Activated naive CD4-positive, alpha-beta T cell treated with anti-CD3 and anti-CD28 coated beads for 36 hours (primary cell): ENCODE measurements at regions of chr19 and their contacts with region 1.

Region 1: GRCh38 chr19:55476100-55476775 is at the start of gene ZNF628:
- DNase-seq: peak; percentile 99
- H3K4me3 Mint-ChIP-seq: peak within 1 kb of the TSS; percentile 90
- H3K27ac Mint-ChIP-seq: peak within 1 kb of the TSS; percentile 90
- H3K4me1 Mint-ChIP-seq: peaks cover 30% of the 10 kb centered on the region
- H3K27me3 Mint-ChIP-seq: no peaks in the 10 kb centered on the region
- total RNA-seq, gene ZNF628: 6.0 to 6.1 TPM

Region 2: GRCh38 chr19:55279770-55280643 is 196.2 kb before region 1 on chr19 and contains the start of gene HSPBP1:
- CTCF ChIA-PET with region 1: no interaction called
- intact Hi-C with region 1: loop called (anchors 1 kb)
- DNase-seq: peak; percentile 97
- H3K4me3 Mint-ChIP-seq: peak within 1 kb of the TSS; percentile 100
- H3K27ac Mint-ChIP-seq: peak within 1 kb of the TSS; percentile 93
- H3K4me1 Mint-ChIP-seq: peaks cover 28% of the 10 kb centered on the region
- H3K27me3 Mint-ChIP-seq: no peaks in the 10 kb centered on the region
- total RNA-seq, gene HSPBP1: 44.3 to 45.0 TPM

Region 3: GRCh38 chr19:55461259-55461973 is 14.8 kb before region 1 on chr19 and contains the start of gene ISOC2:
- CTCF ChIA-PET with region 1: no interaction called
- intact Hi-C with region 1: loop called (anchors 1 kb)
- DNase-seq: peak; percentile 100
- H3K4me3 Mint-ChIP-seq: peak within 1 kb of the TSS; percentile 93
- H3K27ac Mint-ChIP-seq: peak within 1 kb of the TSS; percentile 77
- H3K4me1 Mint-ChIP-seq: peaks cover 20% of the 10 kb centered on the region
- H3K27me3 Mint-ChIP-seq: no peaks in the 10 kb centered on the region
- total RNA-seq, gene ISOC2: 18.6 to 20.5 TPM